Activated CD4-positive, alpha-beta T cell treated with anti-CD3 and anti-CD28 coated beads for 36 hours (primary cell): ENCODE measurements at regions of chr16 and their contacts with region 1.

Region 1: GRCh38 chr16:87895641-87896141 is 26.4 kb upstream of the SLC7A5 start:
- DNase-seq: peak; percentile 95
- ATAC-seq: peak; percentile 91
- H3K4me3 Mint-ChIP-seq: peak overlapping the region; percentile 44
- H3K27ac Mint-ChIP-seq: peak overlapping the region; percentile 99
- H3K4me1 Mint-ChIP-seq: peaks cover 56% of the 10 kb centered on the region
- H3K27me3 Mint-ChIP-seq: no peaks in the 10 kb centered on the region

Region 2: DNA sequence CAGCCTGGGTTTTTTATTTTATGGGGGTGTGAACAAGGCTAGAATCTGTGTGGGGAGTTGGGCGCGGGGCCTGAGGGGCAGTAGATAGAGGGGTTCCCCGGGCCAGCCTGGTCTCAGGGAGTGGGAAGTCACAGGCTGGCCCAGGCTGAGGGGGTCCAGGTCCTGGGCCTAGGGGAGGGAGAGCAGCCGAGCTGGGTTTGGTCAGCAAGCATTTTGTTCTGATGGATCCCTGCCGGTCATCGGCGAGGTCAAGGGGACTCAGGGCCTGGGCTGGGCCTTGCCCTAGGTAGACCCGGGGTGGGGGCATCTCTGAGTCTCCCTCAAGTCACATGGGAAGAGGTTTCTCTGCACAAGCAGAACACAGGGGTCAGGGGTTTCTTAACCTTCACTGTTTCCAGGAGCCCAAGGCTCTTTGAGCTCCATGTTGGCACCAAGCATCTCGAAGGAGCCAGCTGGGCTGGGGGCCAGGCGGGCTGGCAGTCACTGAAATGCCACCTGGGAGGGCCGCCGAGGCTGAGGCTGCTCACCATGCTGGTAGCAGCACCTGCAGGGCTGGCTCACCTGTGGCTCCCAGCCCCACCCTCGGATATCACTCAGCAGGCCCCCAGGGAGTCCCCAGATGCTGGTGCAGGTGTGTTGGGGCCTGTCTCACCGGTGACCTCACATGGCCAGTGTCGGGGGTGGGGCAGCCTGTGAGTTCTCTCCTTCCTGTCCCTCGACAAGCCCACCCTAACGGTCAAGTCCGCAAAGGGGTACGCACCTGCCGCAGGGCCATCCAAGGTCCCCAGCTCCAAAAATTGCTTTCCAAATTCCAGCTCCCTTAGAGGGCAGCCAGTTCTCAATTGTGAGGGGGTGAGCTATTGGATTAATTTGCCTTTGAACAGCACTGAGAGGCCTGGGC is 67.4 kb before region 1 on chr16:
- CTCF ChIA-PET with region 1: no interaction called
- POLR2A ChIA-PET with region 1: no interaction called
- intact Hi-C with region 1: no loop called
- DNase-seq: peak; percentile 49
- ATAC-seq: peak; percentile 9
- H3K4me3 Mint-ChIP-seq: no peak overlapping the region
- H3K27ac Mint-ChIP-seq: peak overlapping the region; percentile 42
- H3K4me1 Mint-ChIP-seq: no peaks in the 10 kb centered on the region
- H3K27me3 Mint-ChIP-seq: no peaks in the 10 kb centered on the region

Region 3: GRCh38 chr16:87860553-87861299 is 35.0 kb before region 1 on chr16:
- CTCF ChIA-PET with region 1: interaction called, 4 read pairs
- POLR2A ChIA-PET with region 1: interaction called, 21 read pairs
- intact Hi-C with region 1: no loop called
- DNase-seq: no peak
- ATAC-seq: peak; percentile 11
- H3K4me3 Mint-ChIP-seq: peak overlapping the region; percentile 45
- H3K27ac Mint-ChIP-seq: peak overlapping the region; percentile 82
- H3K4me1 Mint-ChIP-seq: peaks cover 81% of the 10 kb centered on the region
- H3K27me3 Mint-ChIP-seq: no peaks in the 10 kb centered on the region

Region 4: GRCh38 chr16:87877938-87878507 is 17.7 kb before region 1 on chr16:
- CTCF ChIA-PET with region 1: interaction called, 64 read pairs
- POLR2A ChIA-PET with region 1: interaction called, 17 read pairs
- intact Hi-C with region 1: loop called (anchors 1 kb)
- DNase-seq: peak; percentile 63
- ATAC-seq: peak; percentile 14
- H3K4me3 Mint-ChIP-seq: no peak overlapping the region
- H3K27ac Mint-ChIP-seq: no peak overlapping the region
- H3K4me1 Mint-ChIP-seq: peaks cover 38% of the 10 kb centered on the region
- H3K27me3 Mint-ChIP-seq: no peaks in the 10 kb centered on the region

Region 5: DNA sequence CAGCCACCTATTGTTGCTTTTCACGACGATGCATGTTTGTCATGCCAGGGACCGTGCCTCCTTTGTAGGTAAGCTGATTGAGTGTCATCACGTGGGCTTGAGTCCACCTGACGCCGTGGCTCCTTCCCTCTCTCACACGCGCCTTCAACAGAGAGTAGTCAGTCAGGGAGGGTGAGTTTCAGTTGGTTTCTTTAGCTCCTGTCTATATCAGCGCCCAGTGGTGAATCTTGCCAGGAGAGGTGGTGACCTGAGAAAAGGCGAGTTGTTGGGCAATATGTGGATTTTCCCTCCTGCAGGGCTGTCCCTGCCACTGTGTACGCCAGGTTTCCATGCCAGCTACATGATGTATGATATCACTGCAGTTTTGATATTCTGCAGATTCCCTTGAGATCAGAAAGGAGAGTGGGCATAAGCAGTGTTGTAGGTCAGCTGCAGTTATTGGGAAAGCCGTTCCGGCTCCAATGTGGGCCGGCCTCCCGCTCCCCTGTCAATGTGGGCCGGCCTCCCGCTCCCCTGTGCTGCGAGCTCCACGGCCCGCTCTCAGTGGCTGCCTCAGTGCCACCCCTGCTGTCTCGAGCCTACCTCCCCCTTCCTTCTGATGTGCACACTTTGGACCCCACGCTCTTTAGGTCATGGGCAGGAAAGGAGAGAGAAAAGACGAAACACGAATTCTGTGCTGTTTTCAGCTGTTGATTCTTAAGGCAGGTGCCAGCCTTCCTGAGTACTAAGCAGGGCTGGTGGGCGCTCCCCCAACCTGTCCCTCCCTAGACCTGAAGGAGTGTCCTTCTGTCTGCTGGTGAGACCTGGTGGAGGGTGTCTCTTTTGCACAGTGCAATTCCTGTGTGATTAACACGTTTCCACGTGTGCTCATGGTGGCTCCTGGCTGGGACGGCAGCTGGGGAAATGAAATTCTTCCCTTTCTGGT is 87.1 kb after region 1 on chr16:
- CTCF ChIA-PET with region 1: no interaction called
- POLR2A ChIA-PET with region 1: no interaction called
- intact Hi-C with region 1: loop called in 1 of 2 experiments (anchors 5 kb)
- DNase-seq: no peak
- ATAC-seq: no peak
- H3K4me3 Mint-ChIP-seq: no peak overlapping the region
- H3K27ac Mint-ChIP-seq: peak overlapping the region; percentile 75
- H3K4me1 Mint-ChIP-seq: peaks cover 82% of the 10 kb centered on the region
- H3K27me3 Mint-ChIP-seq: no peaks in the 10 kb centered on the region